ENCODE measurements at regions of chr10 and their contacts with region 1.

Region 1: GRCh38 chr10:104274762-104275721 is 6.1 kb downstream of the GSTO2 start:
- DNase-seq: peak; percentile 50
- H3K4me3 ChIP-seq: no peak overlapping the region
- H3K27ac ChIP-seq: no peak overlapping the region
- H3K4me1 ChIP-seq: no peaks in the 10 kb centered on the region
- H3K27me3 ChIP-seq: peaks cover 0 to 6% of the 10 kb centered on the region in 2 experiments
- CTCF ChIP-seq: peak; percentile 88 to 96
- POLR2A ChIP-seq: no peak

Region 2: DNA sequence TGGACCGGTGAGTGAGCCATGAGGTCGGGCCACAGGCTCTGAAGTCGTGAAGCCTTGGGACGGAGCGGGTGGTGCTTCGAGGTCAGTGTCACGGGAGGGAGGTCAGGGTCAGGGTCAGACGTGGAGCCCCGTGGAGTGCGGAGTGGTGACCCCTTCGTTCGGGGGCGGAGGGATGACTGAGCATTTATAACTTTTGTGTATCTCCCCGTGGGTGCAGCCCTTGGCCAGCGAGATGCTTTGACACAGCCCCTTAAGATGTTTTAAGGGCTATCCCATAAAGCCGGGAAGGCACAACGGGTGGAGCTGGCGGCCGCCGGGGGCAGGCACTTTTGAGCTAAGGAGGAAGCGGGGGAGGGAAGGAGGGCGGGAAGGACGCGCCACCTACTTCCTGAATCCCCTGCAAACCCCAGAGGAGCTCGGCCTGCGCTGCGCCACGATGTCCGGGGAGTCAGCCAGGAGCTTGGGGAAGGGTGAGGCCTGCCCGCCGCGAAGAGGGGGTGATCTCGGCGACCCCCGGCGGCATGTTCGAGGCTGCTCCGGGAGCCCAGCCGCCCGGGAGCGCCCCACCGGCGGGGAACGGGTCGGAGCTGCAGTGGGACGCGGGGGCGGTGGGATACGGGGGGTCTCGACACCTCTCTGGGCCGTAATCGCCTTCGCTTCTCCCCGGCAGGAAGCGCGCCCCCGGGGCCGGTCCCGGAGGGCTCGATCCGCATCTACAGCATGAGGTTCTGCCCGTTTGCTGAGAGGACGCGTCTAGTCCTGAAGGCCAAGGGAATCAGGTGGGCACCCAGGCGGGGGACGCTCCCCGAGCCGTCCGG is 20.3 kb before region 1 on chr10 and contains the start of gene GSTO1:
- CTCF ChIA-PET with region 1: interaction called, 28 read pairs
- POLR2A ChIA-PET with region 1: interaction called, 9 read pairs
- dilution Hi-C with region 1: no loop called
- intact Hi-C with region 1: no loop called
- DNase-seq: peak; percentile 64
- H3K4me3 ChIP-seq: peak within 1 kb of the TSS; percentile 65 to 99 (median 82)
- H3K27ac ChIP-seq: peak within 1 kb of the TSS; percentile 99
- H3K4me1 ChIP-seq: peaks cover 44% of the 10 kb centered on the region
- H3K27me3 ChIP-seq: peaks cover 2% of the 10 kb centered on the region in 2 experiments
- CTCF ChIP-seq: no peak
- POLR2A ChIP-seq: peak; percentile 83
- total RNA-seq, gene GSTO1: 195 and 211 TPM in 2 replicates

Region 3: DNA sequence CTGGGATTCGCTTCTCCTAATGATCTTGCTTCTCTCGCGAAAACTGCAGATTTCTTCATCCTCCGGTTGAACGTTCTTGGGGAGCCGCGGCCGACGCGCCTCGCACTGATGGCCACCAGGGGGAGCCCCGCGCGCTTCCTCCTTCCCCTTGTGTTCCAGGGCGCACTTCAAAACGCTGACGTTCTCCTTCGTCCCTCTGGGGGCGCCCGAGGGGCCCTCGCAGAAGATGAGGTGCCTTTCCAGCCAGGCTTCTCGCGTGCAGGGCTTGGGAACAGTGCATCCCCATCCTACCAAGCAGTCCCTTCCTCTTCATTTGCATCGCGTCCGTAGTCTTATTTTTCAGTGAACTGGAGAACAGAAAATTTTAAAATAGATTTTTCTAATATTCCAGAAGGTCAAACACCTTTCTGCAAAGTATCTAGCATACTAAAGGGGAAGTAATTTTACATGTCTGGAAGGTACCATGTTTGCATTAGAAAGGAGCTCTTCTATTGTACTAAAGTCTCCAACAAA is 16.5 kb after region 1 on chr10:
- CTCF ChIA-PET with region 1: interaction called, 65 read pairs
- POLR2A ChIA-PET with region 1: interaction called, 3 read pairs
- dilution Hi-C with region 1: no loop called
- intact Hi-C with region 1: no loop called
- DNase-seq: peak; percentile 84
- H3K4me3 ChIP-seq: no peak overlapping the region
- H3K27ac ChIP-seq: no peak overlapping the region
- H3K4me1 ChIP-seq: peaks cover 22% of the 10 kb centered on the region
- H3K27me3 ChIP-seq: peaks cover 4 to 9% of the 10 kb centered on the region in 2 experiments
- CTCF ChIP-seq: peak; percentile 100
- POLR2A ChIP-seq: no peak

Region 4: GRCh38 chr10:104308439-104308903 is 33.4 kb after region 1 on chr10:
- CTCF ChIA-PET with region 1: interaction called, 36 read pairs
- POLR2A ChIA-PET with region 1: no interaction called
- dilution Hi-C with region 1: no loop called
- intact Hi-C with region 1: no loop called
- DNase-seq: no peak
- H3K4me3 ChIP-seq: no peak overlapping the region
- H3K27ac ChIP-seq: no peak overlapping the region
- H3K4me1 ChIP-seq: peaks cover 12% of the 10 kb centered on the region
- H3K27me3 ChIP-seq: no peaks in the 10 kb centered on the region
- CTCF ChIP-seq: no peak
- POLR2A ChIP-seq: no peak

Region 5: GRCh38 chr10:104345941-104346340 is 70.9 kb after region 1 on chr10:
- CTCF ChIA-PET with region 1: interaction called, 79 read pairs
- POLR2A ChIA-PET with region 1: no interaction called
- dilution Hi-C with region 1: no loop called
- intact Hi-C with region 1: loop called (anchors 1 kb)
- DNase-seq: no peak
- H3K4me3 ChIP-seq: no peak overlapping the region
- H3K27ac ChIP-seq: no peak overlapping the region
- H3K4me1 ChIP-seq: peaks cover 21% of the 10 kb centered on the region
- H3K27me3 ChIP-seq: no peaks in the 10 kb centered on the region
- CTCF ChIP-seq: no peak
- POLR2A ChIP-seq: no peak

Measured in endothelial cell of umbilical vein (primary cell).